Sciatic nerve (tissue), 2 donors: ENCODE measurements at regions of chr4 and their contacts with region 1.

Region 1: DNA sequence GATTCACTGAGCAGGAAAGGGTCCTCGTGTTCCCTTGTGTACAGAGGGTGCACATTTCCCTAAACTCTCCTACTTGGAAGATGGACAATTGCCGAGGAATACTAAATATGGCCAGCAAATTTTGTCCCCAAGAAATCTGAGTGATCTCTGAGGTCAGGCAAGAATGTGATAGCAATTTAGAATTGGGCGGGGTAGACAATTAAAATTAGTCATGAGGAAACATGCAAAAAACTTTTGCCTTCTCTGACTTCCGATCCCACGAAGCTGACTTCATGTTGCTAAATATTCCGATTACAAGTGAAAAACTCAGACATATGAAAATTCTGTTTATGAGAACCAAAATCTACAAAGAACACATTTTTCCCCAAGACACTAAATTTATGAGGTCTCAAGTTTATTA is 453.9 kb upstream of the ZFP42 start:
- DNase-seq: no peak
- ATAC-seq: no peak

Region 2: DNA sequence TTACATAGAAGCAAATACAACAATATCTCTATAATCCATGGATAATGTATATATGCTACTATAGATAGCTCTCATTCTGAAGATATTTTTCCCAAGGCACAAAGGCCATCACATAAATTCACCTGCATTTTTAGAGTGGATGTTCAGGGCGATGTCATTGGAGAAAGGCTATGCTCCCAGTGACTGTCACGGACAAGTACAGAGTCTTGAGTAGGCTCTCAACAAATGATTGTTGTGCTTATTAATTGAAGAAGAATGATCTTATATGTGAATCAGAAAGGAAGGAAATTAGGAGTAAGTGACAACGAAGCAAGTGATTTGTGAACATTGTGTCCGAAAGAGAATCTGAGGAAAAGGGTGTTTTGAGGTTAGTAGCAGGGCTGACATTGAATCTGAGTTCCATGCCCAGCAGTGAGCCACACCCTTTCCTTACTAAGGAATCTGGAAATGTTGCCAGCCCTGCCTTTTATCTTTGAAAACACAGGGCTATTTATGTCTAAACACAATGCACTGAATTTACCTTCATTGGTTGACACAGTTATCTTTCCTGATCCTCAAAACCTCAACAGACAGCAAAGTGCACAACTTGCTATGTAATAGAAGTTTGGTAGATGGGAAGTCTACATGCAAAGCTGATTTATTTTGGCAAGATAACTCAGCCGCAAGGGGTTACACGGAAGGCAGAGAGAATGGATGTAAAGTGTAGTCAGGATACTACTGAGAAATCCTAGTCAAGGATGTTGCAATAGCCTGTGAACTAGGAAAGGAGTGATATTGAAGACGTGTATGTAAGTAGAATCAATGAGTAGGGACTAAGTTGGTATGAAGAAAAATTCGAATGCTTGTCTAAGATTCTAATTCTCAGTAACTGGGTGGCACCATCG is 1780.1 kb before region 1 on chr4:
- intact Hi-C with region 1: no loop called
- DNase-seq: no peak
- ATAC-seq: peak; percentile 57

Region 3: GRCh38 chr4:186859420-186859819 is 682.2 kb before region 1 on chr4:
- intact Hi-C with region 1: loop called (anchors 5 kb)
- DNase-seq: no peak
- ATAC-seq: no peak

Region 4: DNA sequence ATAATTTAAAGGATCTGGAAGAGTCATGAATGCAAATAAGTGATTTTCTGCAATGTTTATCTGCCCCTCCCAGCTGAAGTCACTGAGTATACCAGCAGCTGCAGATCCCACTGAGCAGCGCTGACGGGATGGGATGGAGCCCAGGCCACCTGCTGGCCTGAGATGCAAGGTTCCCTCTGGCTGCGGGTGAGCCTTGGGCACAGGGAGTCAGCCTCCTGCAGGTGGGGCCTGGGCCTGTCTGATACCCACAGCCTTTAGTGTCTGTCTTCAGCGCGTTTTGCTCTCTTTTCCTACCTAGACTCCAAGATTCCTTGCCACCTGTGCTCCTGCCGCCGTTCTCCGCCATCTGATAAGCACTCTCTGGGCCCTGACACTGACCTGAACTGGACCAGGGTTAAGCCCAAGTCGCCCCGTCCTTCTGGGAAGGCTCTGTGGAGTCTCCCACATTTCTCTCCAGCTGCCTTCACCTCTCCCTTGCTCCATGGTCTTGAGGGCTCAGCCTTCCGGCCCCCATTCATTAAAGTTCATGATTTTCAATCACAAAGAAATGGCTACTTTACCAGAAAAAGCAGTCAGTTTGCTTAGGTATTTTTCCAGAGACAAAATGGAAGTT is 594.9 kb before region 1 on chr4:
- intact Hi-C with region 1: no loop called
- DNase-seq: no peak
- ATAC-seq: no peak

Region 5: DNA sequence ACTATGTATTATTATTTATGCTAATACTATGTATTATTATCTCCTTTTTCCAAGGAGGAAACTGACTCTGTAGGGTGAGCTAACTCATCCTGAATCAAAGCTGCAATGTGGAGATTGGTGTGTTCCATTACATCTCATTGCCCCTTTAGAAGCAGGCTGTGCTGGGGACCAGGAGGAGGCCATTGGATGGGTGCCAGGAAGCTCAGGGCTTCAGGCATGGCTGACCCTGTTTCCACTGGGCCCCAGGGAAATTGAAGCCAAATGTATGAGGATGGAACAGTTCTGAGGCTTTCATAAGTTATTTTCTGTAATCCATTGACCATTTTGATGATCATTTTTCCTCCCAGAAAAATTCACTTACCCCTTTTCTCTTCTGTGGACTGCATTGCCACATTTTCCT is 35.1 kb after region 1 on chr4:
- intact Hi-C with region 1: no loop called
- DNase-seq: no peak
- ATAC-seq: no peak

Region 6: DNA sequence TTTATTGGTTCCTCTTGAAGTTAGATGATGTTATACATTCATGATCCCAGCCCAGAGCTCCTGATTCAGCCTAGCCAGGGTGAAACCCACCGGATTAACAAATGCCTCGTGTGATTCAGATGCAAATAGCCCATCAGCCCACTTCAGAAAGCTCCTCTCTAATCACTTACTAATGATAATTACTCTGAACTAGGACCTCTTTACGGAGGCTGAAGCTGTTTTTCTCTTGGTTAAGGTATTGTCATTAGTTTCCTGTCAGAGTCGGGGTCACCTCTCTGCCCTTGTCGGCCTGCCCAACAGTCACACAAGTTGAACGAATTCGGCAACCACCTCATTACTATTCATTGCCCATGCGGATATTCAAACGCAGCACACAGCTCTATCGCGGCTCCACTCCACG is 490.5 kb after region 1 on chr4:
- intact Hi-C with region 1: no loop called
- DNase-seq: no peak
- ATAC-seq: no peak